Spleen (tissue), 13 donors: ENCODE measurements at regions of chr19 and their contacts with region 1.

Region 1: DNA sequence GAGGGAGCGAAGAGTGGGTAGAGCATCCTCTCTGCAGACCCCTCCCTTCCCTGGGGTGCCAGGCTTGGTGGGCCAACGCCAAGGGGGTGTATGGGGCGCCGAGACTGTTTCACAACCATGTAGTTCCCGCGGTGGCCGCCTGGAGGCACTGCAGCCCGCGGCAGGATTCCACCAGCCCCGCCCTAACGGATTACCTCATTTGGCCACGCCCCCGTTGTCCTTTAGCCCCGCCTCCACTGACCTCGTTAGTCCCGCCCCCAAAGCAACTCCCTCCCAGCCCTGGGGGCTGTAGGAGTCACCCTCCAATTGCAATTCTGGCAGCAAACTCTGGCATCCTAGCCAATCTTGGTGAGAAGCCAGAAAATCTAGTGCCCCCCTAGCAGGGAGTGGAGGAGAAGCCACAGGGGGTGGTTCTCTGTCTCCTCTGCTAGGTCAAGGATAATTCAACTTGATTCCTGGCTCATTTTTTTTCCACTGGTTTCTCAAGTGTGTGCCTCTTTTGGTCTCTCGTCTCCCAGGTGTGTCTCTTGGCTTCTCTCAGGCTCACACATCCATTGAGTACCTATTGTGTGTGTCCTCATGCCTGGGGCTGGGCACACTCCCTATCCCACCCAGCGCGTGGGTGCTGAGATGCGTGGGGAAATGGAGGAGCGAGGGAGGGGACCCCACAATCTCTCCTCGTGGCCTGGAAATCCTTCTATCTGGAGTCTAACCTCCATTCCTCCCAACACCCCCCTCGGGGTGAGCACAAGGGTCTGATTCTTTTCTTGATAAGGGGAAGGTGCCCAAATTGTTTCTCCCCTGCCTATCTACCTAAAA is 2.0 kb downstream of the OLFM2 start:
- DNase-seq: peak; percentile 88
- H3K4me3 ChIP-seq: no peak overlapping the region
- H3K27ac ChIP-seq: no peak overlapping the region
- H3K4me1 ChIP-seq: peaks cover 6 to 41% (median 28%) of the 10 kb centered on the region in 6 donors
- H3K27me3 ChIP-seq: peaks cover 3 to 83% (median 57%) of the 10 kb centered on the region in 7 donors
- CTCF ChIP-seq: peak; percentile 43 to 86 (median 77)
- POLR2A ChIP-seq: no peak

Region 2: DNA sequence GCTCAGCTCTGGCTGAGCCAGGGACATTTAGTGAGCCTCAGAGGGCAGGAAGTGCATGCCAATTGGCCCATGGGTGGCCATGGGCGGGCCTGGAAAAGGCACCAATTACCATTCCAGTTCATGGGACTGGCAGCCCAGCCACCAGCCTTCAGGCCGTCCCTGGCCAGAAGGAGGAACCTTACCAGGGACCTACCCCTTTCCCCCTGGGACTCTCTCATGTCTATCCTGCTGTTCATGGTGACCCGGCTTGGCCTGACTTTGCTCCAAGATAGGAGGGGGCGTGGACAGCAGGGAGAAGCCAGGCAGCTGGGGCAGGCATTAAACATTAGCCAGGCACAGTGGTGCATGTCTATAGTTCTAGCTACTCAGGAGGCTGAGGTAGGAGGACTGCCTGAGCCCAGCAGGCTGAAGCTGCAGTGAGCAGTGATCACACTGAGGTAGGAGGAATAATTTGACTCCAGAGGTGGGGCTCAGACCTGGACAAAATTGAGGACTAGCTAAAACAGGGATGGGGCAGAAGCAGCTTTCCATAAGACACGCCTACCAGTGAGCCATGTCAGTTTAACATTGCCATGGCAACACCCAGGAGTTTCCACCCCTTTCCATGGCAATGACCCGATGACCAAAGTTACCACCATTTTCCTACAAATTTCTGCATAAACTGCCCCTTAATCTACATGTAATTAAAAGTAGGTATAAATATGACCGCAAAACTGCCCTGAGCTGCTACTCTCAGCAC is 381.6 kb before region 1 on chr19:
- intact Hi-C with region 1: no loop called
- DNase-seq: no peak
- H3K4me3 ChIP-seq: no peak overlapping the region
- H3K27ac ChIP-seq: no peak overlapping the region
- H3K4me1 ChIP-seq: no peaks in the 10 kb centered on the region
- H3K27me3 ChIP-seq: no peaks in the 10 kb centered on the region
- CTCF ChIP-seq: no peak
- POLR2A ChIP-seq: no peak

Region 3: DNA sequence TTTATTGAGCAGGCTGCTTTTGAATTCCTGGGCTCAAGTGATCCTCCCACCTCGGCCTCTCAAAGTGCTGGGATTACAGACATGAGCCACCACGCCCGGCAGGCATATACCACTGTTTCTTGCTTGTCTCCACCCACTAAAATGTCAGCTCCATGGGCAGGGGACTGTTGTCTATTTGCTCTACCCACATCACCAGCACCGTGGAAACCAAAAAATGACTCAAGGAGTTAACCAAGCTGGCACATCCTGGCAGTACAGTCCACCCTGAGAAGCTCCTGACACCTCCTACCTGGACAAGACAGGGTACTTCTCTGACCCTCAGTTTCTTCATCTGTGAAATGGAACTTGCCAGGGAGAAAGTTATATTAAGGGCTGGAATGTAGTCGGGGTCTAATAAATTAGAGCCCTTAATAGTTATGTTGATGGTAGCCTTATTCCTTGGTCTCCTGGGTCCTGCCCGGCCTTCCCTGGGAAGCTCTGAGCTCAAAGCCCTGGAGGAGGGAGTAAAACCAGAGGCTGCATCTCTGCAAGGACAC is 92.9 kb after region 1 on chr19:
- intact Hi-C with region 1: loop called (anchors 2 kb)
- DNase-seq: no peak
- H3K4me3 ChIP-seq: peak overlapping the region in 1 of 8 donors; percentile 37
- H3K27ac ChIP-seq: no peak overlapping the region
- H3K4me1 ChIP-seq: peaks cover 0 to 12% (median 8%) of the 10 kb centered on the region in 6 donors
- H3K27me3 ChIP-seq: peaks cover 0 to 37% (median 3%) of the 10 kb centered on the region in 7 donors
- CTCF ChIP-seq: no peak
- POLR2A ChIP-seq: no peak

Region 4: GRCh38 chr19:10245189-10245939 is 311.0 kb after region 1 on chr19:
- intact Hi-C with region 1: loop called (anchors 5 kb)
- DNase-seq: no peak
- H3K4me3 ChIP-seq: no peak overlapping the region
- H3K27ac ChIP-seq: no peak overlapping the region
- H3K4me1 ChIP-seq: peaks cover 4 to 7% (median 5%) of the 10 kb centered on the region in 6 donors
- H3K27me3 ChIP-seq: no peaks in the 10 kb centered on the region
- CTCF ChIP-seq: no peak
- POLR2A ChIP-seq: no peak

Region 5: DNA sequence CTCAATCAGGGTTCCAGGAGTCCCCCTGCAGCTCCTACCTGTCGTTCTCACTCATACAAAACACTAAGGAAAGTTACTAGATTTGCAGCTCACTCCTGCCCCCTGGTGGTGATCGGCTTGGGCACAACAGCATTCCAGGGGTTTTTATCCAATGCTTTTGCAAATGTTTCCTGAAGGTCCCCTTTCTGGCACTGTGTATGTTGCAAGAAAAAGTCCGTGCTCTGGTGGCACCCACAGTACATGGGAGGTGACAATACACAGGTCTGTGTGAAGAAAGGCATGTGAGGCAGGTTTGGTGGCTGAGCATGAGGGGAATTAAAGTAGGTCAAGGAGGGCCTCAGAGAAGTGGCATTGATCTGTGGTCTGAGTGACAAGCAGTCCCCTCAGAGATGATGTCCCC is 454.6 kb after region 1 on chr19:
- intact Hi-C with region 1: loop called (anchors 5 kb)
- DNase-seq: peak; percentile 93
- H3K4me3 ChIP-seq: no peak overlapping the region
- H3K27ac ChIP-seq: peak overlapping the region in 1 of 8 donors; percentile 28
- H3K4me1 ChIP-seq: peaks cover 0 to 34% (median 10%) of the 10 kb centered on the region in 6 donors
- H3K27me3 ChIP-seq: no peaks in the 10 kb centered on the region
- CTCF ChIP-seq: peak; percentile 86 to 97 (median 92)
- POLR2A ChIP-seq: no peak